ENCODE measurements at regions of chrX and their contacts with region 1.

Region 1: GRCh38 chrX:46803140-46803539 is 33.7 kb upstream of the RP2 start:
- DNase-seq: peak; percentile 22
- H3K4me3 ChIP-seq: no peak overlapping the region
- H3K27ac ChIP-seq: no peak overlapping the region
- H3K4me1 ChIP-seq: no peaks in the 10 kb centered on the region
- CTCF ChIP-seq: peak; percentile 57

Region 2: GRCh38 chrX:46130247-46130646 is 672.9 kb before region 1 on chrX:
- CTCF ChIA-PET with region 1: no interaction called
- POLR2A ChIA-PET with region 1: no interaction called
- intact Hi-C with region 1: no loop called
- DNase-seq: no peak
- H3K4me3 ChIP-seq: no peak overlapping the region
- H3K27ac ChIP-seq: no peak overlapping the region
- H3K4me1 ChIP-seq: no peaks in the 10 kb centered on the region
- CTCF ChIP-seq: no peak

Region 3: DNA sequence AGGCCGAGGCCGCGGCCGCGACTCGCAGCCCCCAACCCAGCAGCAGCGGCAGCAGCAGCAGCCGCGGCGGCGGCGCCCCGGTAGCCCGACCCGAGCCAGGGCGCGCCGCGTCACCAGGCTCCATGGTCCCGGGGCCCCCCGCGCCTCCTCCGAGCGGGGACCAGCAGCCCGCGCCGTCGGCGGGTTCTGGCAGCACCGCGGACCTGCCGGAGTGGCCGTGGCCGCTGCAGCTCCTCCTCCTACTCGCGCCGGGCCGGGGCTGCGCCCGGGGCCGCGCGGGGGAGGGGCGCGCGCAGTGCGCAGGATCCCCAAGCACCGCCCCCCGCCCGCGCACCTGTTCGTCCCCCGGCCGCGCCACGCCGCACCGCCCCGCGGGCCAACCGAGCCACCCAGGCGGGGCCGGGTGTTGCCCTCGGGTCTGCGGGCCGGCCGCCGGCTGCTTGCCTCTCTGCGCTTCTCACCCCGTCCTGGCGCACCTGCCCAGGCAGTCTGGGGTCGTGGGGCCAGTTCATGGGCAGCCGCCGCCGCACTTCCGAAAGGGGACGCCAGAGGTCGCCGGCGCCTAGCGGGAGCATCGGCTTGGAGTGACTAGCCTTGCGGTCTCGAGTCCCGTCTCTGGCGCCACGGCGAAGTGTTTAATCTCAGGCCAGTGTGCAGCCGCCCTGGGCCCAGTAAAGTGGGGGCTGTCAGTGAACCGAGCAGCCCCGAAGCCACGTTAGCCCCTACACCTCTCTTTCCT is 44.1 kb before region 1 on chrX and contains the start of gene SLC9A7:
- CTCF ChIA-PET with region 1: no interaction called
- POLR2A ChIA-PET with region 1: no interaction called
- intact Hi-C with region 1: no loop called
- DNase-seq: peak; percentile 85
- H3K4me3 ChIP-seq: peak within 1 kb of the TSS; percentile 97
- H3K27ac ChIP-seq: peak within 1 kb of the TSS; percentile 99
- H3K4me1 ChIP-seq: peaks cover 39% of the 10 kb centered on the region
- CTCF ChIP-seq: peak; percentile 68
- total RNA-seq, gene SLC9A7: 34.2 and 40.5 TPM in 2 replicates

Region 4: DNA sequence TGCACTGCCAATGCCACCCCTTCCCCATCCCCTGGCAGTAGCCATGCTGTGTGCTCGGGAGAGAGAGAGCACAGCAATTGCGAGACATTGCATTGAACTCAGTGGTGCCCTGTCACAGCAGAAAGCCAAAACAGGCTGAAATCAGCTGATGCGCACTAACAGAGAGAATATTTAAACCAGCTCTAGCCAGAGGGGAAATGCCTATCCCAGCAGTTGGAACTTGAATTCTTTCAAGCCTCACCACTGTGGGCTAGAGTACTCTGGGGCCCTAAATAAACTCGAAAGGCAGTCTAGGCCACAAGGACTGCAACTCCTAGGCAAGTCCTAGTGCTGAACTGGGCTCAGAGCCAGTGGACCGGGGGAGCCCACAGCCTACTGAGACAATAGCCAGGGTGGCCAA is 16.0 kb after region 1 on chrX:
- CTCF ChIA-PET with region 1: no interaction called
- POLR2A ChIA-PET with region 1: no interaction called
- intact Hi-C with region 1: no loop called
- DNase-seq: no peak
- H3K4me3 ChIP-seq: no peak overlapping the region
- H3K27ac ChIP-seq: no peak overlapping the region
- H3K4me1 ChIP-seq: no peaks in the 10 kb centered on the region
- CTCF ChIP-seq: no peak

Region 5: DNA sequence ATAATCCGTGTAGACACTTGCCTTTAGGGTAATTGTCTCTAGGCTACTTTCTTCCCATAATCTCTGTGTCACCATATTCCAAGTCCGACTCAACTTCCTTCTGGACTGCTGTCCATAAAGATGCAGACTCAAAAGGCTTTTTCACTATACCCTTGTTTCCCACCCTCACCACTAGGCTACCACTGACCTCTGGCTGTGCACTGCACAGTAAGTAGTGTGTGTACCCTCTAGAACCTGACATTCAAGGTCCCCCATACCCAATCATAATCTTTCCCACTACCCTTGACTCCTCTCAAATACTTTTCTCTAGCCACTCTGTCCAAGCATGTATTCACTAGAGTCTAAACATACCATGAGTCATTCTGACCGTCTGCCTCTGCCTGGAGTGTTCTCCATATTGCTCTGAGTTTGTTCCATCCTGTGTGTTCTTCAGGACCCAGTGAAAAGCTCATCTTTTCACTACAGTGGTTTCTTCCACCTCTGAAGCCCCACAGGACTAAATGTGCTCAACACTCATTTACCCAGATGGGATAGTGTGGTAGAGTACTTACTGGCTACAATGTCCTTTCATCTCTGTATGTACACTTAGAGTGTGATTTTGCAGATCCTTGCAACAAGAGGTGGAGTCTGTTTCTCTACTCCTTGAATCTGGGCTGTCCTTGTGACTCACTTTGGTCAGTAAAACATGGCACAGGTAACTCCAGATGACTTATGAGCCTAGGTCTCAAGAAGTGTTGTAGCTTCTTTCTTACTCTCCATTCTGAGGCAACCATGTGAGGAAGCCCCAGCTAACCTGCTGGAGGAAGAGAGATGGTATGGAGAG is 126.5 kb after region 1 on chrX:
- CTCF ChIA-PET with region 1: no interaction called
- POLR2A ChIA-PET with region 1: no interaction called
- intact Hi-C with region 1: no loop called
- DNase-seq: no peak
- H3K4me3 ChIP-seq: no peak overlapping the region
- H3K27ac ChIP-seq: no peak overlapping the region
- H3K4me1 ChIP-seq: no peaks in the 10 kb centered on the region
- CTCF ChIP-seq: no peak

Region 6: DNA sequence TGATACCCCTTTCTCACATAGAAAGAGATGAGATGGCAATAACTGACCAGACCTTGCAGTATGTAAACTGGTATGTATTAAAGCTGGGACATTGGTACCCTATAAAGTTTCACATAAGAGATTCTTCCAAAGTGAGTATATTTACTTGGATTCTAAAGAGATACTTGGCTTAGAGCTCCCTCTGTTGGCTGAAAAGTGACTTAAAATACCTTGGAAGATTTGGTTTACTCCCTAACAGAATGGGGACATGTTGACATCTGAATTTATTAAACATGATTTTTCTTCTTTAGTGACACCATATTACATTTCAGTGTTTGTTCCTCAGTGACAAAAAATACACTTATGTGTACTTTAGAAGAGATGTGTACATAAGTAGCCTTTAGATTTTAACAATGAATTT is 227.2 kb after region 1 on chrX:
- CTCF ChIA-PET with region 1: no interaction called
- POLR2A ChIA-PET with region 1: no interaction called
- intact Hi-C with region 1: loop called (anchors 10 kb)
- DNase-seq: peak; percentile 73
- H3K4me3 ChIP-seq: no peak overlapping the region
- H3K27ac ChIP-seq: no peak overlapping the region
- H3K4me1 ChIP-seq: peaks cover 6% of the 10 kb centered on the region
- CTCF ChIP-seq: peak; percentile 82